CD8-positive, alpha-beta T cell (primary cell): ENCODE measurements at regions of chr3 and their contacts with region 1.

Region 1: DNA sequence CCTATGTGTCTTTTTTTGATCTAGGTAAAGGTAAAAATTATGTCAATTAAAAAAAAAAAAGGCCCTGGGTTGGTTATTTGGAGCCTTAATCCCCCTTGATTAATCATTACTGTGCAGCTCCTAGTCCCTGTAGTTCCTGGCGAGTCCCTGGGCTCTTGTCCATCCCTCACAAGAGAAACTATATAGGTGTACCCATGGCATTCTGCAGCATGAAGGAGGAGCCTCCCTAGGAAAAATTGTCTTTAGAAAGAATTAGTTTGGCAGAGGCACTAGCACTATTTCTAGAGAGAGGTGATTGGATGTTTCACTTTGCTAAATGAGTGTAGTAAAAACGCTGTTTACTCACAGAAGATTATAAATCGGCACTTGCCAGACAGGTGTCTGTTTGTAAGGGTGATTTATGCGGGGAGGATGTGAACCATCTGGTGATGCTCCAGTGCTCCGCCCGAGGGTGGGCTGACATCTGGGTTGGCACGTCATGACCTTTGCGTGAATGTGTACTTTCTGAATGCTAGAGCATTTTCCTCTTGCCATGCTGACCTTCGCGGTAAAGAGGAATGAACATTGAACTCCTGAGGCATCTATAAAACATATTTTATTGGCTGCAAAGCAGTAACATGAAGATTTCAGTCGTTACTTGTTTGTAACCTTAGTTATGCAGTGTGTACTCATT is 12.6 kb downstream of the PLCL2 start:
- DNase-seq: peak in 5 of 9 experiments; percentile 48 to 76 (median 58)
- ATAC-seq: peak; percentile 85
- H3K4me3 ChIP-seq: no peak overlapping the region
- H3K4me3 Mint-ChIP-seq: peak overlapping the region; percentile 65
- H3K27ac ChIP-seq: peak overlapping the region in 1 of 2 experiments; percentile 18
- H3K27ac Mint-ChIP-seq: peak overlapping the region; percentile 80
- H3K4me1 ChIP-seq: peaks cover 89% of the 10 kb centered on the region
- H3K4me1 Mint-ChIP-seq: peaks cover 90% of the 10 kb centered on the region
- H3K27me3 ChIP-seq: no peaks in the 10 kb centered on the region
- H3K27me3 Mint-ChIP-seq: no peaks in the 10 kb centered on the region
- CTCF ChIP-seq: no peak

Region 2: GRCh38 chr3:16849229-16849628 is 48.2 kb before region 1 on chr3:
- CTCF ChIA-PET with region 1: no interaction called
- POLR2A ChIA-PET with region 1: interaction called, 3 read pairs
- intact Hi-C with region 1: loop called in 1 of 2 experiments (anchors 2 kb)
- DNase-seq: peak; percentile 42 to 88 (median 73)
- ATAC-seq: peak; percentile 84
- H3K4me3 ChIP-seq: peak overlapping the region; percentile 10 to 11
- H3K4me3 Mint-ChIP-seq: peak overlapping the region; percentile 53
- H3K27ac ChIP-seq: peak overlapping the region in 1 of 2 experiments; percentile 56
- H3K27ac Mint-ChIP-seq: no peak overlapping the region
- H3K4me1 ChIP-seq: peaks cover 38% of the 10 kb centered on the region
- H3K4me1 Mint-ChIP-seq: peaks cover 48% of the 10 kb centered on the region
- H3K27me3 ChIP-seq: no peaks in the 10 kb centered on the region
- H3K27me3 Mint-ChIP-seq: no peaks in the 10 kb centered on the region
- CTCF ChIP-seq: no peak

Region 3: DNA sequence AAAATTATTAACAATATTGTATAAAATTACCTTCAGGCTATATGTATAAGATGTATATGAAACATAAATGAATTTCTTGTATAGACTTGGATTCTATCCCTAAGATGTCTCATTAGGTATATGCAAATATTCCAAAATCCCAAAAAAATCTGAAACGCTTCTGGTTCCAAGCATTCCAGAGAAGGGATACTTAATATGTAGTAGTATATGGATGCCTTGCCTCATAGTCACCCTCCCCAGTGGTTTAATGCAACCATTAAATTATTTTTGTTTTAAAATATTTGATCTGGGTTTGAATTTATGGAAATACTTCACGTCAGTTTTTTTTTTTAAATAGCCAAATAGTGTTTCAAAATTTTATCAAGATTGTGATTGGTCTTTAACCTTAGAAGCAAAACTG is 14.5 kb after region 1 on chr3:
- CTCF ChIA-PET with region 1: no interaction called
- POLR2A ChIA-PET with region 1: interaction called, 3 read pairs
- intact Hi-C with region 1: loop called in 1 of 2 experiments (anchors 1 kb)
- DNase-seq: no peak
- ATAC-seq: no peak
- H3K4me3 ChIP-seq: no peak overlapping the region
- H3K4me3 Mint-ChIP-seq: no peak overlapping the region
- H3K27ac ChIP-seq: no peak overlapping the region
- H3K27ac Mint-ChIP-seq: no peak overlapping the region
- H3K4me1 ChIP-seq: peaks cover 54% of the 10 kb centered on the region
- H3K4me1 Mint-ChIP-seq: peaks cover 80% of the 10 kb centered on the region
- H3K27me3 ChIP-seq: no peaks in the 10 kb centered on the region
- H3K27me3 Mint-ChIP-seq: no peaks in the 10 kb centered on the region
- CTCF ChIP-seq: no peak